HepG2 (cell line): ENCODE measurements at regions of chr6 and their contacts with region 1.

Region 1: GRCh38 chr6:32894080-32895005 is 40.4 kb downstream of the PSMB9 start:
- DNase-seq: peak; percentile 90
- ATAC-seq: peak; percentile 100
- H3K4me3 ChIP-seq: peak overlapping the region; percentile 66 to 90 (median 74)
- H3K27ac ChIP-seq: peak overlapping the region; percentile 64
- H3K4me1 ChIP-seq: peaks cover 25% of the 10 kb centered on the region
- H3K27me3 ChIP-seq: no peaks in the 10 kb centered on the region; a peak in 1 of 5 replicates
- CTCF ChIP-seq: peak; percentile 39
- EP300 ChIP-seq: no peak
- POLR2A ChIP-seq: peak; percentile 54 to 87; a peak in 3 of 4 replicates
- RAD21 ChIP-seq: no peak

Region 2: GRCh38 chr6:32816746-32817204 is 77.6 kb before region 1 on chr6 and contains the start of gene HLA-DOB:
- CTCF ChIA-PET with region 1: no interaction called
- POLR2A ChIA-PET with region 1: no interaction called
- in situ Hi-C with region 1: no loop called
- intact Hi-C with region 1: no loop called
- DNase-seq: no peak
- ATAC-seq: no peak; the same call in 2 of the 3 replicates
- H3K4me3 ChIP-seq: no peak within 1 kb of the TSS
- H3K27ac ChIP-seq: no peak within 1 kb of the TSS
- H3K4me1 ChIP-seq: no peaks in the 10 kb centered on the region
- H3K27me3 ChIP-seq: peaks cover 0 to 24% of the 10 kb centered on the region in 2 experiments; a peak in 2 of 5 replicates
- CTCF ChIP-seq: no peak
- EP300 ChIP-seq: no peak
- POLR2A ChIP-seq: no peak
- RAD21 ChIP-seq: no peak
- total RNA-seq, gene HLA-DOB: not detected in 2 replicates

Region 3: GRCh38 chr6:32838114-32838958 is 56.0 kb before region 1 on chr6 and contains the start of gene TAP2:
- CTCF ChIA-PET with region 1: no interaction called
- POLR2A ChIA-PET with region 1: interaction called, 12 read pairs
- in situ Hi-C with region 1: no loop called
- intact Hi-C with region 1: no loop called
- DNase-seq: peak; percentile 89
- ATAC-seq: peak; percentile 97
- H3K4me3 ChIP-seq: peak within 1 kb of the TSS; percentile 82 to 87 (median 86)
- H3K27ac ChIP-seq: peak within 1 kb of the TSS; percentile 80
- H3K4me1 ChIP-seq: peaks cover 24% of the 10 kb centered on the region
- H3K27me3 ChIP-seq: no peaks in the 10 kb centered on the region
- CTCF ChIP-seq: peak; percentile 99
- EP300 ChIP-seq: no peak
- POLR2A ChIP-seq: peak; percentile 60 to 73
- RAD21 ChIP-seq: peak; percentile 99
- total RNA-seq, gene TAP2: 9.8 and 17.6 TPM in 2 replicates

Region 4: DNA sequence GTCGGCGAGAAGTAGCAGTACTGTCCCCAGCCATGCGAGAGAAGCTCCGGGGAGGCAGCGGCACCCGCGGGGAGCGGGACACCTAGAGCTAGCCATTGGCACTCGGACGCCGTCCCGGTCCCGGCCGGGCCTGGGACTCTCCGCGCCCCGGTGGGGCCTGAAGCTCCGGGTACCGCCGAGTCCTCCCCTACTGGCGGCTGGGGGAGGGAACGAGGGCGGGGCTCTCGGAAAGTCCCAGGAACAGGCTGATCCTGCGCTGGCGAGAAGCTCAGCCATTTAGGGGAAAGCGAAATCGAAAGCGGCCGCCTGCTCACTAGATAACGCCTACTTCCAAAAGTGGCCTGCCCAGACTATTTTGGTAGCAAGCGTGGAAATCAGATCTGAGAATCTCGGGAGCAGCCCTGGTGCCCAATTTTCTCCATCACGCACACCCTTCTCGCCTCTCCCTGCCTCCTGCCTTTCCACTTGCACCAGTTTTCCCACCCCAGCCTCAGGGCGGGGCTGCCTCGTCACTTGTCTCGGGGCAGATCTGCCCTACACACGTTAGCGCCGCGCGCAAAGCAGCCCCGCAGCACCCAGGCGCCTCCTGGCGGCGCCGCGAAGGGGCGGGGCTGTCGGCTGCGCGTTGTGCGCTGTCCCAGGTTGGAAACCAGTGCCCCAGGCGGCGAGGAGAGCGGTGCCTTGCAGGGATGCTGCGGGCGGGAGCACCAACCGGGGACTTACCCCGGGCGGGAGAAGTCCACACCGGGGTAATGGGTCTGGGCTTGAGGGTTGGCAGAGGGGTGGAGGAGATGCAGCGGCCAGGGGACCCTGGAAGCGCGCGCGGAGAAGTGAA is 40.6 kb before region 1 on chr6 and contains the starts of genes PSMB9 and TAP1:
- CTCF ChIA-PET with region 1: no interaction called
- POLR2A ChIA-PET with region 1: interaction called, 11 read pairs
- in situ Hi-C with region 1: no loop called
- intact Hi-C with region 1: no loop called
- DNase-seq: peak; percentile 88
- ATAC-seq: peak; percentile 89
- H3K4me3 ChIP-seq: peak within 1 kb of the TSS; percentile 93 to 96 (median 95)
- H3K27ac ChIP-seq: peak within 1 kb of the TSS; percentile 62
- H3K4me1 ChIP-seq: peaks cover 26% of the 10 kb centered on the region
- H3K27me3 ChIP-seq: no peaks in the 10 kb centered on the region; a peak in 1 of 5 replicates
- CTCF ChIP-seq: peak; percentile 97
- EP300 ChIP-seq: peak in 1 of 2 experiments; percentile 2; a peak in 1 of 4 replicates
- POLR2A ChIP-seq: peak; percentile 61 to 80
- RAD21 ChIP-seq: peak; percentile 94
- total RNA-seq, gene PSMB9: 16.0 and 21.4 TPM in 2 replicates
- total RNA-seq, gene TAP1: 23.0 and 52.2 TPM in 2 replicates

Region 5: DNA sequence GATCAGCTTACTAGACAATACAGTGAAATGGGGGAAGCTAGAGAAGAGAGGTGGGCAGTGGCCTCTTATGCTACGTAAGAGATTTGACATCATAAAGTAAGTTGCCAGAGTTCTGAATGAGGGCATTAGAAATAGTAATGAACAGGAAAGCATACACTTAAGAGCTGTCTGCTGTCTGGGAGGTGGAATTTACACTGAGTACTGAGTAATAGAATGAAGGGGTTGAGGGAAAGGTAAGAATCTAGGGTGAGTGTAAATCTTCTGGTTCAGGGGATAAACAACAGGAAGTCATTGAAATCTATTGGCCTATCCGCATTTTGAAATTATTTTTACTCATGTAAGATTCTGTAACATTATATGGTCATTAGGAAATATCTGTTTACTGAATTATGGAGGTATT is 10.7 kb after region 1 on chr6:
- CTCF ChIA-PET with region 1: no interaction called
- POLR2A ChIA-PET with region 1: interaction called, 13 read pairs
- in situ Hi-C with region 1: no loop called
- intact Hi-C with region 1: no loop called
- DNase-seq: no peak
- ATAC-seq: no peak
- H3K4me3 ChIP-seq: no peak overlapping the region
- H3K27ac ChIP-seq: no peak overlapping the region
- H3K4me1 ChIP-seq: no peaks in the 10 kb centered on the region
- H3K27me3 ChIP-seq: no peaks in the 10 kb centered on the region
- CTCF ChIP-seq: no peak
- EP300 ChIP-seq: no peak
- POLR2A ChIP-seq: no peak
- RAD21 ChIP-seq: no peak

Region 6: DNA sequence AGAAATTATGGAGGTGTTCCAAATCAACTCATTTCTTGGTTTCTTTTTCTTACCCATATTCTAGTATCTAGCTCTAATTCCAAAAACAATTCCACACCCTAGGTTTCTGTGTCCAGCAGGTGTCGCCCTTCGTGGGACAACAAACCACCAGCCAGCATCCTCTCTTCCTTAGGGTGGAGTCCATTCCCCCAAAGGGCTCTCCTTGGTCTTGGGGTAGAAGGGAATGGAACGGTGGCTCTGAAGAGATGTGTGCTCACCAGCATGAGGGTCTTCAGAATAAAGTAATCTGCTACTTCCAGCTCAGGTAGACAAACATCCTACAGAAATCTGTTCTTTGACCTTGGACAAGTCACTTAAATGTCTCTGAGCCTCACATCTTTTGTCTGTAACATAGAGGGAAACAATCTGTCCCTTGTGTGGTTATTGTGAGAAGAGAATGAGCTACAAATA is 39.3 kb after region 1 on chr6:
- CTCF ChIA-PET with region 1: no interaction called
- POLR2A ChIA-PET with region 1: interaction called, 6 read pairs
- in situ Hi-C with region 1: no loop called
- intact Hi-C with region 1: loop called (anchors 5 kb)
- DNase-seq: peak; percentile 67
- ATAC-seq: peak; percentile 65
- H3K4me3 ChIP-seq: no peak overlapping the region
- H3K27ac ChIP-seq: no peak overlapping the region
- H3K4me1 ChIP-seq: peaks cover 16% of the 10 kb centered on the region
- H3K27me3 ChIP-seq: peaks cover 2 to 28% of the 10 kb centered on the region in 2 experiments; a peak in 3 of 5 replicates
- CTCF ChIP-seq: peak; percentile 85
- EP300 ChIP-seq: no peak
- POLR2A ChIP-seq: no peak
- RAD21 ChIP-seq: peak; percentile 69

Region 7: DNA sequence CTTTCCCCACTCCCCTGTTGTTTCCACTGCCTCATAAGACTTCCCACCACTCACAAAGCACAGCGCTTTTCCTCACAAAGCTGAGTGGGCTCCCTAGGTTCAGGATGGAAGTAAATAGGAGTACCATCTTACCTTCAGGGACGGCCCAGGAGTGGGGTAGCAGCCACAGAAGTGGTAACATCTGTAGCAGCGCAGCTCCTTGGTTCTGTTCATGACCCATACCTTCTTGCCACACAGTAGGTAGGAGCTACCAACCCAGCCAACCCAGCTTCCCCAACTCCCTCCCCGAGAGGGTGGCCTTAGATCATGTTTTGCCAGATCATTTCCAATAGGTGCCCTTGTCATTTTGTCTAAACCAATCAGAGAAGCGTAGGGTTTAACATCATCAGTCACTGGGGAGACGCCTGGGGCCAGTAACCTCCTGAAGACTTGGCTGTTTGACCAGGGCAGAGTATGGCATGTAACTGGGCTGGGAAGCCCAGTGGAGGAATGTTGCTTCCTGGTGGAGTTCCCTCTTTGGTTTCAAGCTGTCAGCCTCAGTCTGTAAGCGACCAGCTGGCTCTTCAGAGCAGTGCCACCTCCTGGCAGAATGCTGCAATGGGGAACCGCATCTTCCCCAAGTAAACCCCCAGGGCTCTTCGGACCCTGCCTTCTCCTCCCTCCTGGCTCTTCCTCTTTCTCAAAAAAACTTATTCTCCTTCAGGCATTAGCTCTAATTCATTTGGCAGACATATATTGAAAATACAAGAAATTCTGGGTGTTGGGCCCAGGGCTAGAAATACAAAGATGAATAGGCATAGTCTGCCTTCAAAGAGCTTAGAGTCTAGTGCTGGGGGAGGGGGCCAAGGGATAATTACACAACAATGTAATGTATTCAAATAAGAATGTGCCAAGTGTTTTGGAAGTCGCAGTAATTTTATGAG is 58.7 kb after region 1 on chr6 and contains the start of gene HLA-DMA:
- CTCF ChIA-PET with region 1: no interaction called
- POLR2A ChIA-PET with region 1: interaction called, 14 read pairs
- in situ Hi-C with region 1: loop called (anchors 5 kb)
- intact Hi-C with region 1: no loop called
- DNase-seq: peak; percentile 85
- ATAC-seq: peak; percentile 92
- H3K4me3 ChIP-seq: no peak within 1 kb of the TSS
- H3K27ac ChIP-seq: no peak within 1 kb of the TSS
- H3K4me1 ChIP-seq: peaks cover 12% of the 10 kb centered on the region
- H3K27me3 ChIP-seq: peaks cover 1 to 13% of the 10 kb centered on the region in 2 experiments; a peak in 2 of 5 replicates
- CTCF ChIP-seq: peak; percentile 82
- EP300 ChIP-seq: no peak
- POLR2A ChIP-seq: no peak
- RAD21 ChIP-seq: peak; percentile 62
- total RNA-seq, gene HLA-DMA: 0.71 and 1.3 TPM in 2 replicates

Region 8: GRCh38 chr6:32984605-32985389 is 90.5 kb after region 1 on chr6:
- CTCF ChIA-PET with region 1: no interaction called
- POLR2A ChIA-PET with region 1: interaction called, 18 read pairs
- in situ Hi-C with region 1: loop called (anchors 5 kb)
- intact Hi-C with region 1: no loop called
- DNase-seq: peak; percentile 84
- ATAC-seq: peak; percentile 73
- H3K4me3 ChIP-seq: no peak overlapping the region
- H3K27ac ChIP-seq: no peak overlapping the region
- H3K4me1 ChIP-seq: no peaks in the 10 kb centered on the region
- H3K27me3 ChIP-seq: peaks cover 0 to 6% of the 10 kb centered on the region in 2 experiments; a peak in 2 of 5 replicates
- CTCF ChIP-seq: peak; percentile 96
- EP300 ChIP-seq: no peak
- POLR2A ChIP-seq: no peak
- RAD21 ChIP-seq: peak; percentile 90

Region 9: GRCh38 chr6:33513213-33513612 is 618.9 kb after region 1 on chr6:
- CTCF ChIA-PET with region 1: no interaction called
- POLR2A ChIA-PET with region 1: no interaction called
- in situ Hi-C with region 1: no loop called
- intact Hi-C with region 1: no loop called
- DNase-seq: no peak
- ATAC-seq: peak; percentile 72
- H3K4me3 ChIP-seq: no peak overlapping the region
- H3K27ac ChIP-seq: no peak overlapping the region
- H3K4me1 ChIP-seq: peaks cover 9% of the 10 kb centered on the region
- H3K27me3 ChIP-seq: peaks cover 0 to 42% of the 10 kb centered on the region in 2 experiments; a peak in 2 of 5 replicates
- CTCF ChIP-seq: no peak
- EP300 ChIP-seq: no peak
- POLR2A ChIP-seq: no peak
- RAD21 ChIP-seq: no peak